RWPE1 (cell line): ENCODE measurements at regions of chr4 and their contacts with region 1.

Region 1: GRCh38 chr4:127616898-127617297 is 15.9 kb upstream of the INTU start:
- DNase-seq: no peak
- H3K27ac ChIP-seq: no peak overlapping the region
- CTCF ChIP-seq: no peak

Region 2: DNA sequence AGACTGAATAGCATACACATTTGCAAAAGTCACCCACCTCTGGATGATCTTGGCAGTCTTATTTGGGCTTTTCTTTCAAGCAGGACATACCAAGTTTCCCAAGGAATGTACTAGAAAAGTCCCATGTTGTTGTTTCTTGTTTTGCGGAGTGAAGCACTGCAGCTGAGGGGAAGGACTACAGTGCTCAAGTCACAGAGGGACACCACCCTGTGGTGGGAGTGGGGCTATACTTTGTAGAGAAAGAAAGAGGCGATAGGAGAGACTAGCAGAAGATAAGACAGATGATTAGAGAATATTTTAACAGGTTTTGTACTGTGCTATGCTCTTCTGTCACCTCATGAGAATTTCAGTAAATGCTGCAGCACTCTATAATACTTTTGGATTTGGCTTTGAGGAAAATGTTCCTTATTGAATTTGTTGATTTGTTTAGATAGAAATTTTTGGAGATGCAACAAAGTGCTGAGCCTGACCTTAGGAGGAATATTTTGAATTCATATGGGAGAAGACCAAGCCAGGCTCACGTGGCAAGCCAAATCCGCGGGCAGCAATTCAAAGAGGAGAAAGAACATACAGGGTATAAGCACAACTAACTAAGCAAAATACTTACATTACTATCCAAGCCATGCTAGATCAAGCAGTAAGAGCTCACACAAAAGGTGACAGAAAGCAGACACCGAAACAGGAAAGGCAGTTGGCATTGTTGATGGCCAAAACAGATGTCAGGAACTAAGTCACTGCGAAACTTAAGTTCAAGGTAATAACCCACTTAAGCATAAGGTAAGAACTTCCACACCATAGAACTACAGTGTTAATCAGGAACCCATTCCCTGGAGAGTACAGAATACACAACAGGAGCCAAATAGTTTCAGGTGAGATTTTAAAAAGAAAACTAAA is 264.4 kb before region 1 on chr4:
- CTCF ChIA-PET with region 1: no interaction called
- POLR2A ChIA-PET with region 1: no interaction called
- DNase-seq: no peak
- H3K27ac ChIP-seq: no peak overlapping the region
- CTCF ChIP-seq: no peak

Region 3: DNA sequence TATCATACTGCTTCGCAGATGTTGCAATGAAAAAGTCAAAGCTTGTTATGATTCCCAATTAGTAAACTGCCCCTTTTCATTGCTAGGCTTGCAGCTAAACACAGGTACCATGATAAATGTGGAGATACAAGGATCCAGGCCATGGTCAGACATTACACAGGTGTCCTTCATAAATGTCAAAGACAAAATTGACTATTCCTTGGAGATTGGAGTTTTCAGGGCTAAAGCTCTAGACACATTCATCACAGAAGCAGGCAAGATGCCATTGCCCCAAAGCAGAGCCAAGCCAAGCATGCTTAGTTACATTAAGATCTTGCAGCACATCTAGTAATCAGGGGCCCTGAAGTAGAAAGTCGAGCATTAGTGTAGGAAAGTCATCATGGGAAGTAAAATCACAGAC is 95.4 kb before region 1 on chr4:
- CTCF ChIA-PET with region 1: no interaction called
- POLR2A ChIA-PET with region 1: no interaction called
- DNase-seq: no peak
- H3K27ac ChIP-seq: no peak overlapping the region
- CTCF ChIP-seq: no peak

Region 4: DNA sequence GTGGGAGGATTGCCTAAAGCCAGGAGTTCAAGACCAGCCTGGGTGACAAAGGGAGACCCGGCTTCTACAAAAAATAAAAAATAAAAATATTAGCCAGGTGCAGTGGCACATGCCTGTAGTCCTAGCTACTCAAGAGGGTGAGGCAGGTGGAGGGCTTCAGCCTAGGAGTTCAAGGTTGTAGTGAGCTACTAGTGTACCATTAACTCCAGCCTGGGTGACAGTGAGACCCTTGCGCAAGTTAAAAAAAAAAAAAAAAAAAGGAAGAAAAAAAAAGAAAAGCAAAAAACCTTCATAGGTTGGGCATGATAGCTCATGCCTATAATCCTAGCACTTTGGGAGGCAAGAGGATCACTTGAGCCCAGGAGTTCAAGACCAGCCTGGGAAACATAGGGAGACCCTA is 1470.6 kb after region 1 on chr4:
- CTCF ChIA-PET with region 1: interaction called, 10 read pairs
- POLR2A ChIA-PET with region 1: no interaction called
- DNase-seq: no peak
- H3K27ac ChIP-seq: no peak overlapping the region
- CTCF ChIP-seq: no peak